MCF 10A (cell line): ENCODE measurements at regions of chr13 and their contacts with region 1.

Region 1: GRCh38 chr13:19782049-19782726 is 557 bp downstream of the PSPC1 start:
- DNase-seq: peak; percentile 52
- H3K4me3 Mint-ChIP-seq: peak overlapping the region; percentile 89
- H3K27ac Mint-ChIP-seq: peak overlapping the region; percentile 87
- H3K4me1 Mint-ChIP-seq: peaks cover 13% of the 10 kb centered on the region
- H3K27me3 Mint-ChIP-seq: no peaks in the 10 kb centered on the region
- CTCF ChIP-seq: no peak

Region 2: DNA sequence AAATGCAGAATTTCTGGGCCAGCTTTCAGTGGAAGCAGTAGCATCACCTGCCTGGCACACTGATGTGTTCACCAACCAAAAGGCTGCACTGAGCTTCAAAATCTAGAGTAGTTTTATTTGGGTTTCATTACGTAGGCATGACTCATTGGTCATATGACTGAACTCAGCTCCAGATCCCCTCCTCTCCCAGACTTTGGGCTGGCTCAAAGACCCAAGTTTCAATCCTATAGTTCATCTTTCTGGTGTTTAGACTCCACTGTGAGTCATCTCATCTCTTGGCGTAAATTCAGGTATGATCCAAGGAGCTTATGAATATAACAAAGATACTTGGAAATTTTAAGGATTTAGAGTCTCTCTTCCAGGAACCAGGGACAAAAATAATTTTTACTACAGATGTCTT is 63.6 kb after region 1 on chr13:
- CTCF ChIA-PET with region 1: no interaction called
- POLR2A ChIA-PET with region 1: interaction called, 10 read pairs
- intact Hi-C with region 1: no loop called
- DNase-seq: peak; percentile 97
- H3K4me3 Mint-ChIP-seq: no peak overlapping the region
- H3K27ac Mint-ChIP-seq: no peak overlapping the region
- H3K4me1 Mint-ChIP-seq: peaks cover 6% of the 10 kb centered on the region
- H3K27me3 Mint-ChIP-seq: no peaks in the 10 kb centered on the region
- CTCF ChIP-seq: no peak